Activated CD4-positive, alpha-beta memory T cell treated with anti-CD3 and anti-CD28 coated beads for 36 hours (primary cell): ENCODE measurements at regions of chr13 and their contacts with region 1.

Region 1: DNA sequence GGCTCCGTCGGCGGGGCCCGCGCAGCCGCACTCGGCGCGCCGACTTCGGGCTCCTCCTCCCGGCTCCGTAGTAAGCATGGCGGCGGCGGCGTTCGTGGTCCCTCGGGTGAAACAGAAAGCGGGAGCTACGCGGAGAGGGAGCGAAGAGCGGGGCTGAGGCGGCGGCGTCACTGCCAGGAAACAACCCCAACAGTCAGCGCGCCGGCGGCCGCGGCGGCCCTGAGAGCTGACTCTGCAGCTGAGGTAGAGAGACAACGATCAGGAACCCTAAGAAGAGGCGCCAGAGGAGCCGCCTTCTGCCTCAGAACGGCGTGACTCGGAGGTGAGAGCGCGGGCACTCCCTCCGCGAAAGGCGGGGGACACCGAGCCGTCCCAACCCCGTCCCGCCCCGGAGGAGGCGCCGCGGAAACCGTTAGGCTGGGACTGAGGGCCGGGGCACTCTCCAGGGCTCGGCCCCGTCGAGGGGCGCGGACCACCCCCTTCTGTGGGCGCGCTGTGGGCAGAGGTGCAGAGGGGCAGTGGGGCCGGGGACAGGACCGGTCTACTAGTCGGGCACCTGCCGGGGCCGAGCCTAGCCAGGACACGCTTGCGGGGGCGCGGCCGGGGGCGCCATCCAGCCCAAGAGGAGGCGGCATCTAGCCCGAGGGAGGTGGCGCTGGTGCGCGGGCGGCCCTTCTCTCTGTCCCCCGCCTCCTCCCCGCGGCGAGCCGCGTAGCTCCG is at the start of gene FNDC3A:
- DNase-seq: peak; percentile 91
- H3K4me3 Mint-ChIP-seq: peak within 1 kb of the TSS; percentile 93
- H3K27ac Mint-ChIP-seq: peak within 1 kb of the TSS; percentile 98
- H3K4me1 Mint-ChIP-seq: peaks cover 43% of the 10 kb centered on the region
- H3K27me3 Mint-ChIP-seq: no peaks in the 10 kb centered on the region
- total RNA-seq, gene FNDC3A: 21.1 to 21.6 TPM

Region 2: GRCh38 chr13:48653472-48653939 is 322.5 kb before region 1 on chr13 and contains the start of gene CYSLTR2:
- CTCF ChIA-PET with region 1: no interaction called
- POLR2A ChIA-PET with region 1: no interaction called
- intact Hi-C with region 1: loop called (anchors 5 kb)
- DNase-seq: peak; percentile 16
- H3K4me3 Mint-ChIP-seq: peak within 1 kb of the TSS; percentile 75
- H3K27ac Mint-ChIP-seq: peak within 1 kb of the TSS; percentile 81
- H3K4me1 Mint-ChIP-seq: peaks cover 33% of the 10 kb centered on the region
- H3K27me3 Mint-ChIP-seq: no peaks in the 10 kb centered on the region
- total RNA-seq, gene CYSLTR2: 2.1 to 2.4 TPM

Region 3: DNA sequence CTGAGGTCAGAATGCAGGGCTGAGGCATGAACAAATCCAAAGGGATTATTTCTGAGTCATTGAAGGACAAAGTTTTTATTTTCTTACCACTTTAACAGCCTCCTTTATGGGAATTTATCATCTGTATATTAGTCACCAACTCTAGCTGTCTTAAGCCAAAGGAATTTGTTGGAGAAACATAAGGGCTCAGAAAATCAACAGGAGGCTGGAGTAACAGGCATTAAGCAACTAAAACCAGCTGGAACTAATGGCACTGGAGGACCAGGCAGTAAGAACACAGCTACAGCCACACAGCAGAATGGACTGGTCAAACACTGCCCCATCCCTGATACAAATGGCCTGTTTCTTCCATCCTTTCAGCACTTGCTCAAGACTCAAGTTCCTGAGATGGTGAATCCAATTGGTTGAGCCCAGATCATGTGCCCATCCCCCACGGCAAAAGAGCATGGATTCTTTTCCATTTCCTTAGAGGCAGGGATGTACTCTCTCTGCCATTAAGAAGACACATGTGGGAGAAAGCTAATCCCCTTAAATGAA is 157.5 kb before region 1 on chr13:
- CTCF ChIA-PET with region 1: no interaction called
- POLR2A ChIA-PET with region 1: no interaction called
- intact Hi-C with region 1: loop called (anchors 5 kb)
- DNase-seq: no peak
- H3K4me3 Mint-ChIP-seq: no peak overlapping the region
- H3K27ac Mint-ChIP-seq: no peak overlapping the region
- H3K4me1 Mint-ChIP-seq: peaks cover 17% of the 10 kb centered on the region
- H3K27me3 Mint-ChIP-seq: no peaks in the 10 kb centered on the region

Region 4: GRCh38 chr13:48879432-48879831 is 96.6 kb before region 1 on chr13:
- CTCF ChIA-PET with region 1: no interaction called
- POLR2A ChIA-PET with region 1: interaction called, 11 read pairs
- intact Hi-C with region 1: loop called (anchors 1 kb)
- DNase-seq: no peak
- H3K4me3 Mint-ChIP-seq: no peak overlapping the region
- H3K27ac Mint-ChIP-seq: no peak overlapping the region
- H3K4me1 Mint-ChIP-seq: peaks cover 42% of the 10 kb centered on the region
- H3K27me3 Mint-ChIP-seq: no peaks in the 10 kb centered on the region

Region 5: DNA sequence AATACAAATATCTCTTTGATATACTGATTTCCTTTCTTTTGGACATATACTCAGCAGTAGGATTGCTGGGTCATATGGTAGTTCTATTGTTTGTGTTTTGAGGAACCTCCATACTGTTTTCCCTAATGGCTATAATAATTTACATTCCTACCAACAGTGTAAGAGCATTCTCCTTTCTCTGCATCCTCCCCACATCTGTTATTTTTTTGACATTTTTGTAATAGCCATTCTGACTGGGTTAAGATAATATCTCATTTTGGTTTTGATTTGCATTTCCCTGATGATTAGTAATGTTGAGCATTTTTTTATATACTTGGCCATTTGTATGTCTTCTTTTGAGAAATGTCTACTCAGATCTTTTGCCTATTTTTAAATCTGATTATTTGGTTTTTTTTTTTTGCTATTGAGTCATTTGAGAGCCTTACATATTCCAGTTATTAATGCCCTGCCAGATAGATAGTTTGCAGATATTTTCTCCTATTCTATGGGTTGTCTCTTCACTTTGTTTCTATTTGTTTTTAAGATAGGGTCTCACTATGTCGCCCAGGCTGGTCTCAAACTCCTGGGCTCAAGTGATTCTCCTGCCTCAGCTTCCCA is 95.4 kb after region 1 on chr13:
- CTCF ChIA-PET with region 1: no interaction called
- POLR2A ChIA-PET with region 1: no interaction called
- intact Hi-C with region 1: no loop called
- DNase-seq: no peak
- H3K4me3 Mint-ChIP-seq: no peak overlapping the region
- H3K27ac Mint-ChIP-seq: no peak overlapping the region
- H3K4me1 Mint-ChIP-seq: peaks cover 9% of the 10 kb centered on the region
- H3K27me3 Mint-ChIP-seq: no peaks in the 10 kb centered on the region

Region 6: DNA sequence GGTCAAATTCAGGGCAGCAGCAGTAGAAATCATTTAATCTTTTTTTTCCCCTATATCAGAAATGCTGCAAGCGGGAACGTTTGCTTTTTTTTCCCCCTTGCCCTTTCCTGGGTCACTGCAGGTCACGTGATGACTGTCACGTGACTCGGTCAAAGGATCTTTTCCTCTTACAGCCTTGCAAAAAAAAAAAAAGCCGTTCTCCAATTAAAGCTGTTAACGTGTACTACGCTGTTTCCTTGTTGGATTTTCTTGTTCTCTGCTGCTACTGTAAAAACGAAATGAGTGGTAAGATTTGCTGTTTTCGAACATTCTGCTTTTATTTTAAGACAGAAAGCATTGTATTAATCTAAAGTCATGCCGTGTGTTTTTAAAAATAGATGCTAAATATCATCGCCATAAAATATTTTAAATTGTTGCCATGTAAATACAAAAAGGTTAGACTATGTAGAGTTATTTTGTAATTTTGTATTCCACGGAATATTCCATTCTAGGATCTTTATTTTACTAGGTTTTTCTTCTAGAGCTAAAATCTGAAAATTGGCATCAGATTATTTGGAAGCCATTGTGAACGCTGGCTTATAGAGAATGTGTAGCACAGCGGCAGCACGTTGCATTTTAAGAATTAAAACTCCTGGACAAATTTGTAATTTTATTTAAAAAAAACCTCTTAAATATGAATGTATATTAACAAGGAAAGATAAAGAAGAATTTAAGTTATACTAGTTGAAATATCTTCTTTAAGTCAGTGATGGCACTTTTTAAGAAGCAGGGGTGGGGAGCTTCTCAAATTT is 134.3 kb after region 1 on chr13:
- CTCF ChIA-PET with region 1: no interaction called
- POLR2A ChIA-PET with region 1: no interaction called
- intact Hi-C with region 1: loop called (anchors 2 kb)
- DNase-seq: peak; percentile 85
- H3K4me3 Mint-ChIP-seq: peak overlapping the region; percentile 85
- H3K27ac Mint-ChIP-seq: peak overlapping the region; percentile 78
- H3K4me1 Mint-ChIP-seq: peaks cover 26% of the 10 kb centered on the region
- H3K27me3 Mint-ChIP-seq: no peaks in the 10 kb centered on the region

Region 7: GRCh38 chr13:49146950-49147355 is 170.9 kb after region 1 on chr13:
- CTCF ChIA-PET with region 1: no interaction called
- POLR2A ChIA-PET with region 1: no interaction called
- intact Hi-C with region 1: no loop called
- DNase-seq: no peak
- H3K4me3 Mint-ChIP-seq: peak overlapping the region; percentile 30
- H3K27ac Mint-ChIP-seq: peak overlapping the region; percentile 44
- H3K4me1 Mint-ChIP-seq: peaks cover 28% of the 10 kb centered on the region
- H3K27me3 Mint-ChIP-seq: no peaks in the 10 kb centered on the region

Region 8: GRCh38 chr13:49976314-49977258 is 1000.6 kb after region 1 on chr13:
- CTCF ChIA-PET with region 1: no interaction called
- POLR2A ChIA-PET with region 1: no interaction called
- intact Hi-C with region 1: no loop called
- DNase-seq: peak; percentile 81
- H3K4me3 Mint-ChIP-seq: no peak overlapping the region
- H3K27ac Mint-ChIP-seq: no peak overlapping the region
- H3K4me1 Mint-ChIP-seq: peaks cover 2% of the 10 kb centered on the region
- H3K27me3 Mint-ChIP-seq: no peaks in the 10 kb centered on the region